ENCODE measurements at regions of chr15 and their contacts with region 1.

Region 1: DNA sequence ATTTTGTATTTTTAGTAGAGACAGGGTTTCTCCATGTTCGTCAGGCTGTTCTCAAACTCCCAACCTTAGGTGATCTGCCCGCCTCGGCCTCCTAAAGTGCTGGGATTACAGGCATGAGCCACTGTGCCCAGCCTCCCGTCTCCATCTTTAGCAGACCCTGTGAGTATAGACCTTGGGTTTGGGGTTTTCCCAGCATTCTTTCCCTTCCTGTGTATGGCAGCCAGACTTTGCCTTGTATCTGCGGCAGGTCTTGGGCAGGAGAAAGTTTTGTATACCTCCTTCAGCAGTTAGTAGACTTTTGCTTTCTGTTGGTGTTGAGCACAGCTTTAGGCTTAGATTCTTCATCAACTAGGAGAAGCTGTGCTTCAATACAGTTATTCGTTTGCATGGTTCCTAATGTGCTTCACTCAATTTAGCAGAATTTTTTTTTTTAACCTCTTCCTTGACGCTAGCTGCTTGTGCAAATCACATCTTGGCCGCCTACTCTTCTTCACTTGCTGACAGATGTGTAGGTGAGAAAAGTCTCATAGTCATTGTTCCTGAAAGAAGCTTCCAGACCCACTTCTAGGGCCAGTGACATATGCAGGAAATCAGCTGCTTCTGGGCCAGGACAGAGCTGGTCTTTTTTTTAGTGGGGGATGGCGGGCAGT is 38.4 kb downstream of the MAP2K1 start:
- DNase-seq: no peak
- ATAC-seq: peak; percentile 58
- H3K4me3 ChIP-seq: peak overlapping the region; percentile 3; the same call in 1 of the 2 replicates
- H3K27ac ChIP-seq: peak overlapping the region; percentile 70
- H3K4me1 ChIP-seq: peaks cover 51% of the 10 kb centered on the region
- H3K27me3 ChIP-seq: no peaks in the 10 kb centered on the region
- CTCF ChIP-seq: no peak
- EP300 ChIP-seq: no peak; a peak in 1 of 4 replicates
- POLR2A ChIP-seq: no peak
- RAD21 ChIP-seq: no peak

Region 2: GRCh38 chr15:66472176-66472999 is 47.3 kb after region 1 on chr15:
- CTCF ChIA-PET with region 1: interaction called, 3 read pairs
- POLR2A ChIA-PET with region 1: interaction called, 3 read pairs
- RAD21 ChIA-PET with region 1: interaction called, 11 read pairs
- SMC1A ChIA-PET with region 1: interaction called, 9 read pairs
- in situ Hi-C with region 1: no loop called
- intact Hi-C with region 1: no loop called
- DNase-seq: peak; percentile 78
- ATAC-seq: peak; percentile 94
- H3K4me3 ChIP-seq: no peak overlapping the region
- H3K27ac ChIP-seq: peak overlapping the region; percentile 69
- H3K4me1 ChIP-seq: peaks cover 35% of the 10 kb centered on the region
- H3K27me3 ChIP-seq: no peaks in the 10 kb centered on the region
- CTCF ChIP-seq: no peak
- EP300 ChIP-seq: no peak
- POLR2A ChIP-seq: no peak
- RAD21 ChIP-seq: no peak